Adrenal gland (tissue), 19 donors: ENCODE measurements at regions of chr11 and their contacts with region 1.

Region 1: GRCh38 chr11:76152086-76152681 is 54.1 kb downstream of the WNT11 start:
- DNase-seq: peak; percentile 86 to 95 (median 92)
- H3K4me3 ChIP-seq: peak overlapping the region in 1 of 4 donors; percentile 54
- H3K27ac ChIP-seq: no peak overlapping the region
- H3K4me1 ChIP-seq: peaks cover 17% of the 10 kb centered on the region in 2 donors
- H3K27me3 ChIP-seq: no peaks in the 10 kb centered on the region
- CTCF ChIP-seq: peak; percentile 83 to 98 (median 96)
- POLR2A ChIP-seq: no peak

Region 2: GRCh38 chr11:75721855-75722668 is 430.1 kb before region 1 on chr11:
- intact Hi-C with region 1: loop called in 1 of 2 experiments (anchors 10 kb)
- DNase-seq: peak in 2 of 7 donors; percentile 16 to 21
- H3K4me3 ChIP-seq: no peak overlapping the region
- H3K27ac ChIP-seq: no peak overlapping the region
- H3K4me1 ChIP-seq: no peaks in the 10 kb centered on the region
- H3K27me3 ChIP-seq: no peaks in the 10 kb centered on the region
- CTCF ChIP-seq: no peak
- POLR2A ChIP-seq: no peak

Region 3: DNA sequence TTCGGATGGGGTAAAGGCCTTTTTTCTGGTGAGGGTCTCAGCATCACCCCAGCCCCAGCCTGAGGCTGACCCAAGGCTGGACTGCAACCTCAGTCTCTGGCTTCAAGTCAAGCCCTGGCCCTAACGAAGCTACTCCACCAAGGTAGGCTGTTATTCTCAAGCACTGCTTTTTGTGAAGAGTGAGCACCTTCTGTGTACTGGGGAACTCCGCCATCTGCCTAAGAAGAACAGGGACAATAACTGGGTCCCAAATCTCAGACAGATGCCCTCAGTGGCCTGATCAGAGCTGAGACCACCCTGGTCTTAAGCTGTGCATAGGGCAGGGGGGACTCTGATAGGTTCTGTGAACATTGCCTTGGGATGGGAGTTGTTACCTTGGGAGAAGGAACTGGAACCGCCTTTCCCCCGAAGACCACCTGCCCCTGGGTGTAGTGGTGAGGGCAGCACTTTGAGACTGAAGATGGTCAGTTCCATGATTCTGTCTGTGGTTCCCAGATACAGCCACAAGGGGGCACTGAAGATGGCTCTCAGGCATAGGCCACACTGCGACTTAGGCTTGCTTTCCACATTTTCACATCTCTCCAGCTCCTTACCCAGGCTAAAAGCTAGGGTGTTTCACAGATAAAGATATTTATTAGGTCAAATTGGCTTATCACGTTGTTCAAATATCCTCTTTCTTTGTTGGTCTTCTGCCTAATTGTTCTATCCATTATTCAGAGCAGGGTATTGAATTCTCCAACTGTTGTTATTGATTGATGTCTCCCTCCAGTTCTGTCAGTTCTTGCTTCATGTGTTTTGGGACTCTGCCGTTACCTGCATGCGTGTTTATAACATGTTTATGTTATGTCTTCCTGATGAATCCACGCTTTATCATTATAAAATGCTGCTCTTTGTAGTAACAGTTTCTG is 349.0 kb before region 1 on chr11:
- intact Hi-C with region 1: loop called in 1 of 2 experiments (anchors 5 kb)
- DNase-seq: peak; percentile 71 to 94 (median 84)
- H3K4me3 ChIP-seq: no peak overlapping the region
- H3K27ac ChIP-seq: peak overlapping the region in 2 of 5 donors; percentile 54 to 64
- H3K4me1 ChIP-seq: peaks cover 0 to 17% of the 10 kb centered on the region in 2 donors
- H3K27me3 ChIP-seq: no peaks in the 10 kb centered on the region
- CTCF ChIP-seq: peak; percentile 80 to 97 (median 93)
- POLR2A ChIP-seq: no peak

Region 4: GRCh38 chr11:75896843-75897419 is 255.3 kb before region 1 on chr11:
- intact Hi-C with region 1: loop called (anchors 5 kb)
- DNase-seq: no peak
- H3K4me3 ChIP-seq: no peak overlapping the region
- H3K27ac ChIP-seq: no peak overlapping the region
- H3K4me1 ChIP-seq: no peaks in the 10 kb centered on the region
- H3K27me3 ChIP-seq: no peaks in the 10 kb centered on the region
- CTCF ChIP-seq: peak; percentile 54 to 87 (median 76)
- POLR2A ChIP-seq: no peak

Region 5: GRCh38 chr11:76371170-76371569 is 219.0 kb after region 1 on chr11:
- intact Hi-C with region 1: no loop called
- DNase-seq: peak in 1 of 7 donors; percentile 26
- H3K4me3 ChIP-seq: no peak overlapping the region
- H3K27ac ChIP-seq: peak overlapping the region in 3 of 5 donors; percentile 33 to 62 (median 35)
- H3K4me1 ChIP-seq: peaks cover 15 to 45% of the 10 kb centered on the region in 2 donors
- H3K27me3 ChIP-seq: no peaks in the 10 kb centered on the region
- CTCF ChIP-seq: no peak
- POLR2A ChIP-seq: no peak